ENCODE measurements at regions of chr16 and their contacts with region 1.

Region 1: DNA sequence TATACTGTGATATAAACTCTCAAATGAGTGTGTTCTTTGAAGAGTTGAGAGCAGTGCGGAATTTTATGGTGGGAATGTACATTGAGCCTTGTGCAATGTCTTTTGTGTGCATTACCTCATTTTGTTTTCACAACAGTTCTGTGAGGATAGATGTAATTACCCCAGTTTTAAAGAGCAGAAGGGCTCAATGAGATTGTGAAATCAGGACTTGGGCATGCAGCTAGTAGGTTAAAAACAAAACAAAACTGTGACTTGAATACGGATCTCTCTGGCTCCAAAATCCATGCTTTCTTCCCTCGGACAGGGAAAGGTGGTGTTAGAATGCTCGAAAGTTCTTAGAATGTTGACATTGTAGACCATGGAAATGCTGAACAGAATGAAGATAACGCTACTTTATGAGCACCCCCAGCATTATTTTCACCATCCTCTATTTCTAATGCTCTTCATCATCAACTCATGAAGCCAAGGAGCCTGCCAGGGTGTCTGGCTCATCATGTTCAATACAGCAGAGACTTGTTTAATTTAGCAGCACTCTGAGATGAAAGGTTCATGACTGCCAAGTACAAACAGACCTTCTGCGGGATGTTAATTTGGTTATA is 17.1 kb downstream of the MRTFB start:
- DNase-seq: no peak
- H3K4me3 ChIP-seq: no peak overlapping the region
- H3K27ac ChIP-seq: peak overlapping the region; percentile 6 to 33
- H3K4me1 ChIP-seq: peaks cover 0 to 6% of the 10 kb centered on the region in 2 donors
- H3K27me3 ChIP-seq: no peaks in the 10 kb centered on the region
- CTCF ChIP-seq: no peak

Region 2: DNA sequence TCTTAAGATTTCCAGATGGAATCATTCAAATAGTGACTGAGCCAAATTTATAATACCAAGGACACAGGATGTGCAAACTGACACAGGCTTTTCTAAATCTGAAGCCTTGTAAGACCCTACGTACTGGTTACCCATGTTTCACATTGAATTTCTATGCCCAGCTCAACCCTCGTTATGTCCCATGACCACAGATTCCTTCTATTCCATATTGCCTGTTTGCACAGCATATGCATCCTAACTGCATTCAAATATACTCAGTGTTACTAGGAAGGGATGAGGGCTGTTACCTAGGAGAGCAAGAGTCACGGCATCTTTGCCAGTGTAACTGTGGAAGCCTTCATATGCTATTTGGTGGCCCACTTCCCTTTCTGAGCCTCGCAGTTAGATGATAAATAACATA is 881.6 kb before region 1 on chr16:
- intact Hi-C with region 1: no loop called
- DNase-seq: no peak
- H3K4me3 ChIP-seq: no peak overlapping the region
- H3K27ac ChIP-seq: no peak overlapping the region
- H3K4me1 ChIP-seq: no peaks in the 10 kb centered on the region
- H3K27me3 ChIP-seq: no peaks in the 10 kb centered on the region
- CTCF ChIP-seq: no peak

Region 3: DNA sequence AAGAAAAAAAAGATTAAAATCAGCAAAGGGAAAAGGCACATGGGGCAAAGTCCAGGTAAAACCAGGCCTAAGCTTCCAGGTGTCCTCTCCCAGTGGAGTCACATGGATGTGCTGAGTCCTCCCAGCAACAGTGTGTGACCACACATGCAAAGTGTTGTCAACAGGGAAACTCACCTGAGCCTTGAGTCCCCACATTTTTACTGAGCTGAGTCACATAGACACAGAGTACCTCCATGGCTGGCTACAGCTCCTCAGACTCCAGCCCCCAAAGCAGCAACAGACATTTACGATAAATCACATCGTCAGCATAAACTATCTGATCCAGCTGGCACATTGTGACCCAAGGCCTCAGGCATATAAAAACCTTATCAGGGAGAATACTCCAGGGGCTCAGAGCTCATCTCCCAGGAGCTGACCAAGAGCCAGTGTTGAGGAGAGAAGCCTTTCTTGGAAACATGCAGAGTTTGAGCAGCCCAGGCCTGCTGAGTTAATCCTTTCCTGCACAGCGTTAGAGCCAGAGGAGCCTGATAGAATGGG is 147.8 kb before region 1 on chr16:
- intact Hi-C with region 1: loop called (anchors 5 kb)
- DNase-seq: no peak
- H3K4me3 ChIP-seq: no peak overlapping the region
- H3K27ac ChIP-seq: no peak overlapping the region
- H3K4me1 ChIP-seq: peaks cover 0 to 4% of the 10 kb centered on the region in 2 donors
- H3K27me3 ChIP-seq: no peaks in the 10 kb centered on the region
- CTCF ChIP-seq: no peak

Measured in ascending aorta (tissue), 2 donors.